ENCODE measurements at regions of chr5 and their contacts with region 1.

Region 1: GRCh38 chr5:60960591-60960990 is 15.6 kb downstream of the NDUFAF2 start:
- DNase-seq: peak in 5 of 9 donors; percentile 18 to 48 (median 39)
- ATAC-seq: peak; percentile 54
- H3K4me3 ChIP-seq: no peak overlapping the region
- H3K4me3 Mint-ChIP-seq: peak overlapping the region in 1 of 10 donors; percentile 9
- H3K27ac ChIP-seq: no peak overlapping the region
- H3K27ac Mint-ChIP-seq: peak overlapping the region in 1 of 9 donors; percentile 8
- H3K4me1 ChIP-seq: no peaks in the 10 kb centered on the region
- H3K4me1 Mint-ChIP-seq: peaks cover 0 to 30% (median 17%) of the 10 kb centered on the region in 7 donors
- H3K27me3 ChIP-seq: no peaks in the 10 kb centered on the region
- H3K27me3 Mint-ChIP-seq: no peaks in the 10 kb centered on the region

Region 2: GRCh38 chr5:59893429-59894227 is 1067.0 kb before region 1 on chr5 and contains the start of gene PDE4D:
- CTCF ChIA-PET with region 1: no interaction called
- POLR2A ChIA-PET with region 1: no interaction called
- intact Hi-C with region 1: no loop called
- DNase-seq: no peak
- ATAC-seq: peak; percentile 24
- H3K4me3 ChIP-seq: no peak within 1 kb of the TSS
- H3K4me3 Mint-ChIP-seq: peak within 1 kb of the TSS in 3 of 10 donors; percentile 1 to 32 (median 29)
- H3K27ac ChIP-seq: no peak within 1 kb of the TSS
- H3K27ac Mint-ChIP-seq: peak within 1 kb of the TSS in 1 of 9 donors; percentile 40
- H3K4me1 ChIP-seq: no peaks in the 10 kb centered on the region
- H3K4me1 Mint-ChIP-seq: peaks cover 0 to 9% (median 6%) of the 10 kb centered on the region in 7 donors
- H3K27me3 ChIP-seq: peaks cover 0 to 3% of the 10 kb centered on the region in 2 donors
- H3K27me3 Mint-ChIP-seq: peaks cover 44 to 60% (median 59%) of the 10 kb centered on the region in 5 donors
- total RNA-seq, gene PDE4D: 35.2 to 102 (median 55.0) TPM

Region 3: GRCh38 chr5:60810438-60811085 is 150.0 kb before region 1 on chr5:
- CTCF ChIA-PET with region 1: no interaction called
- POLR2A ChIA-PET with region 1: no interaction called
- intact Hi-C with region 1: no loop called
- DNase-seq: no peak
- ATAC-seq: no peak
- H3K4me3 ChIP-seq: no peak overlapping the region
- H3K4me3 Mint-ChIP-seq: no peak overlapping the region
- H3K27ac ChIP-seq: no peak overlapping the region
- H3K27ac Mint-ChIP-seq: no peak overlapping the region
- H3K4me1 ChIP-seq: no peaks in the 10 kb centered on the region
- H3K4me1 Mint-ChIP-seq: no peaks in the 10 kb centered on the region
- H3K27me3 ChIP-seq: no peaks in the 10 kb centered on the region
- H3K27me3 Mint-ChIP-seq: peaks cover 0 to 23% (median 17%) of the 10 kb centered on the region in 5 donors

Region 4: GRCh38 chr5:60896991-60897390 is 63.6 kb before region 1 on chr5:
- CTCF ChIA-PET with region 1: no interaction called
- POLR2A ChIA-PET with region 1: no interaction called
- intact Hi-C with region 1: no loop called
- DNase-seq: no peak
- ATAC-seq: no peak
- H3K4me3 ChIP-seq: no peak overlapping the region
- H3K4me3 Mint-ChIP-seq: no peak overlapping the region
- H3K27ac ChIP-seq: no peak overlapping the region
- H3K27ac Mint-ChIP-seq: no peak overlapping the region
- H3K4me1 ChIP-seq: no peaks in the 10 kb centered on the region
- H3K4me1 Mint-ChIP-seq: no peaks in the 10 kb centered on the region
- H3K27me3 ChIP-seq: no peaks in the 10 kb centered on the region
- H3K27me3 Mint-ChIP-seq: no peaks in the 10 kb centered on the region

Region 5: GRCh38 chr5:61215996-61216395 is 255.4 kb after region 1 on chr5:
- CTCF ChIA-PET with region 1: no interaction called
- POLR2A ChIA-PET with region 1: no interaction called
- intact Hi-C with region 1: loop called in 1 of 2 experiments (anchors 2 kb)
- DNase-seq: no peak
- ATAC-seq: no peak
- H3K4me3 ChIP-seq: no peak overlapping the region
- H3K4me3 Mint-ChIP-seq: no peak overlapping the region
- H3K27ac ChIP-seq: no peak overlapping the region
- H3K27ac Mint-ChIP-seq: no peak overlapping the region
- H3K4me1 ChIP-seq: no peaks in the 10 kb centered on the region
- H3K4me1 Mint-ChIP-seq: no peaks in the 10 kb centered on the region
- H3K27me3 ChIP-seq: no peaks in the 10 kb centered on the region
- H3K27me3 Mint-ChIP-seq: peaks cover 4 to 19% (median 6%) of the 10 kb centered on the region in 5 donors

Measured in naive thymus-derived CD4-positive, alpha-beta T cell (primary cell).